Activated CD4-positive, alpha-beta T cell treated with anti-CD3 and anti-CD28 coated beads, Interleukin-2, amount 10 ng/mL, durations not matched to agents 24 days and 14 days (primary cell): ENCODE measurements at regions of chr19 and their contacts with region 1.

Region 1: GRCh38 chr19:1039646-1040475 is at the start of gene ABCA7:
- DNase-seq: peak; percentile 100
- H3K4me3 Mint-ChIP-seq: peak within 1 kb of the TSS; percentile 98
- H3K27ac Mint-ChIP-seq: peak within 1 kb of the TSS; percentile 86
- H3K4me1 Mint-ChIP-seq: peaks cover 44% of the 10 kb centered on the region
- H3K27me3 Mint-ChIP-seq: no peaks in the 10 kb centered on the region
- total RNA-seq, gene ABCA7: 15.8 TPM in 2 replicates

Region 2: DNA sequence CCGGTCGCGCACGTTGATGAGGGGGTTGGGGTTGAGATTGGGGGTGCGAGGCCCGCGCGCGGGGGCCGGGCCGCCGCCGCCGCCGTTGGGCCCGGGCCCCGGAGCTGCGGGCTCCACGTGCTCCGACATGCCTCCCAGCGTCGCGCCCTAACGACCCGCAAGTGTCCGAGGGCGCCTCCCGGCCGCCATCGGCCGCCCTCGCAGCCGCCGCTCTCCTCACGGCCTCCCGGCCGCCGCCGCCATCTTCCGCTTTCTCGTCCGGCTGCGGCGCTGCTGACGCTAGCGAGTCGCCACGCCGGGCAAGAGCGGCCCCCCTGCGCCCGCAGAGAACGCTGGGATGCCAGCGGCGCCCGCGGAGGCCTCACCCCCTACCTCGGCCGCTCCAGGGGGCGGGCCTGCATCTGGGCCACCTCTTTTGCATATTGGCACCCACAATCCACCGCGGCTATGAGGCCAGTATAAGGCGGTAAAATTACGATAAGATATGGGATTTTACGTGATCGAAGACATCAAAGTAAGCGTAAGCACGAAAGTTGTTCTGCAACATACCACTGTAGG is 18.9 kb before region 1 on chr19 and contains the start of gene TMEM259:
- intact Hi-C with region 1: loop called (anchors 2 kb)
- DNase-seq: peak; percentile 99
- H3K4me3 Mint-ChIP-seq: peak within 1 kb of the TSS; percentile 98
- H3K27ac Mint-ChIP-seq: peak within 1 kb of the TSS; percentile 99
- H3K4me1 Mint-ChIP-seq: peaks cover 26% of the 10 kb centered on the region
- H3K27me3 Mint-ChIP-seq: no peaks in the 10 kb centered on the region
- total RNA-seq, gene TMEM259: 154 and 156 TPM in 2 replicates

Region 3: DNA sequence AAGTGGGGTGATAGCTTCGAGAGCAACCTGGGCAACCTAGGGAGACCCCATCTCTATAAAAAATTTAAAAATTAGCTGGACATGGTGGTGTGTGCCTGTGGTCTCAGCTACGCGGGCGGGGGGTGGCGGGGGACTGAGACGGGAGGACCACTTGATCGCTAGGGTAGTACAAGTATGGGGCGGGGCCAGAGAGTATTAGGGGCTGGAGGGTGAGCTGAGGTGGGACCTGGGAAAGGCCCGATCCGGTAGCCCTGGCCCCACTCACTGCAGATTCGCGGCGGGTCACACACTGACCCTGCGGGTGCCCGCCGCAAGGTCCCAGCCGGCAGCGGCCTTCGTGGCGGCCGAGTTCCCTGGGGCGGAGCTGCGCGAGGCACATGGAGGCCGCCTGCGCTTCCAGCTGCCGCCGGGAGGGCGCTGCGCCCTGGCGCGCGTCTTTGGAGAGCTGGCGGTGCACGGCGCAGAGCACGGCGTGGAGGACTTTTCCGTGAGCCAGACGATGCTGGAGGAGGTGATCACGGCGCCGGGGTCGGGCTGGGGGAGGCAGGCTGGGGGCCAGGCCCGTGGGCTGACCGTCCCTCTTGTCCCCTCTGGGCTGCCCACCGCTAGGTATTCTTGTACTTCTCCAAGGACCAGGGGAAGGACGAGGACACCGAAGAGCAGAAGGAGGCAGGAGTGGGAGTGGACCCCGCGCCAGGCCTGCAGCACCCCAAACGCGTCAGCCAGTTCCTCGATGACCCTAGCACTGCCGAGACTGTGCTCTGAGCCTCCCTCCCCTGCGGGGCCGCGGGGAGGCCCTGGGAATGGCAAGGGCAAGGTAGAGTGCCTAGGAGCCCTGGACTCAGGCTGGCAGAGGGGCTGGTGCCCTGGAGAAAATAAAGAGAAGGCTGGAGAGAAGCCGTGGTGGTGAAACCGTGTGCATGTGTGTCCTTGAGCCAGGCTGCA is 25.1 kb after region 1 on chr19:
- intact Hi-C with region 1: loop called (anchors 2 kb)
- DNase-seq: peak; percentile 94
- H3K4me3 Mint-ChIP-seq: peak overlapping the region; percentile 48
- H3K27ac Mint-ChIP-seq: peak overlapping the region; percentile 44
- H3K4me1 Mint-ChIP-seq: peaks cover 29% of the 10 kb centered on the region
- H3K27me3 Mint-ChIP-seq: no peaks in the 10 kb centered on the region

Region 4: DNA sequence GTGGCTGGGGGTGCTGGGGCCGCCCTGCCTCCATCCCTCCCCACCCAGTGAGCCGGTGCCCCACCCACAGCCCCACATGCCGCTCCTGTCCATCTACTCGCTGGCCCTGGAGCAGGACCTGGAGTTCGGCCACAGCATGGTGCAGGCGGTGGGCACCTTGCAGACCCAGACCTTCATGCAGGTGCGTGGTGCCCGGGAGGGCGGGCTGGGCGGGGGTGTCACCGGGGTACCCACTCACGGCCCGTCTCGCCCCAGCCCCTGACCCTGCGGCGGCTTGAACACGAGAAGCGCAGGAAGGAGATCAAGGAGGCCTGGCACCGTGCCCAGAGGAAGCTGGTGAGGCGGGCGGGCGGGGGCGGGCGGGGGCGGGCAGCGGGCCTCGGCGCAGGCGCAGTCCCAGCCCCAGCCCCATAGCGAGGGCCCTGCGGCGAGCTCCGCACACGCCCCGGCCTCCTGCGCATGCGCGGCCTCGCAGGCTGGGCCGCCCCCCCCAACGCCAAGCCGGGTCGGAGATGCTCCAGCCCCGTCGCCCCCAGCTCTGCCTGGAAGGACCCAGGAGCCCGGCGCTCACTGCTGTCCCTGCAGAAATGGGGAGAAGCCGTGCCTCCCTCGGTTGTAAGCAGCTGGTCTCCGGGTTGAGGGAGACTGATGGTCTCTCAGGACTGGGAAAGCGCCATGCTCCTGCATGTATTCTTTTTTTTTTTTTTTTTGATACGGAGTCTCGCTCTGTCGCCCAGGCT is 34.9 kb after region 1 on chr19:
- intact Hi-C with region 1: loop called (anchors 2 kb)
- DNase-seq: peak; percentile 94
- H3K4me3 Mint-ChIP-seq: peak overlapping the region; percentile 78
- H3K27ac Mint-ChIP-seq: peak overlapping the region; percentile 89
- H3K4me1 Mint-ChIP-seq: peaks cover 42% of the 10 kb centered on the region
- H3K27me3 Mint-ChIP-seq: peaks cover 2% of the 10 kb centered on the region